ENCODE measurements at regions of chr6 and their contacts with region 1.

Region 1: DNA sequence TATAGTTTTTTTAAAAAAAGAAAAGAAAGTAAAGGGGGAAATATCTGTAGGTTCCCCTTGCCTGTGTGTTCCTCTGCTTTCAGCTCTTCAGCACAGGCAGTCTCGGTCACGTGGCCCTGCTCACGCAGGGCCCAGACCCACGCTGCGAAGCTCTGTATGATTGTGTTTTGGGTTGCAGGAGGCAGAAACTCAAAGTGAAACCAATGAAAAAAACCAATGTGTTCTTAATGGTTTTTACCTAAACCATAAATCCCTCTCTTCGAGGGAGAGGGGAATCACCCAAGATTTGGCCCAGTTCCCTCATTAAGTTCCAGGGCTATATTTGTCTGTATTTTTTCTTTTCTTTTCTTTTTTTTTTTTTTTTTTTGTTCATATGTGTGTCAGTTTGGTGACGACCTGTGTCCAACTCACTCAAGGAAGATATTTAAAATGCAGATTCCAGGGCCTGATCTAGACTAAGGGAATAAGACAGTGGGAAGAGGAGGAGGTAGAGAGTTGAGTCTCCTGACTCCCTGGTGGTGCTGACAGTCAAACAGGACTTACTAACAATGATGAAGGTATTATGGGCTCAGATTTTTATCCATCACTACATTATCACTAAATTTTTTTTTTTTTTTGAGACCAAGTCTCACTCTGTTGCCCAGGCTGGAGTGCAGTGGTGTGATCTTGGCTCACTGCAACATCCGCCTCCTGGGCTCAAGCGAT is 33.8 kb upstream of the RREB1 start:
- DNase-seq: peak; percentile 36 to 83 (median 48)
- ATAC-seq: peak; percentile 99
- H3K4me3 ChIP-seq: peak overlapping the region; percentile 27
- H3K4me3 Mint-ChIP-seq: peak overlapping the region; percentile 25
- H3K27ac ChIP-seq: no peak overlapping the region
- H3K27ac Mint-ChIP-seq: peak overlapping the region; percentile 58
- H3K4me1 ChIP-seq: peaks cover 11% of the 10 kb centered on the region
- H3K4me1 Mint-ChIP-seq: peaks cover 12% of the 10 kb centered on the region
- H3K27me3 ChIP-seq: no peaks in the 10 kb centered on the region
- H3K27me3 Mint-ChIP-seq: no peaks in the 10 kb centered on the region
- CTCF ChIP-seq: no peak

Region 2: DNA sequence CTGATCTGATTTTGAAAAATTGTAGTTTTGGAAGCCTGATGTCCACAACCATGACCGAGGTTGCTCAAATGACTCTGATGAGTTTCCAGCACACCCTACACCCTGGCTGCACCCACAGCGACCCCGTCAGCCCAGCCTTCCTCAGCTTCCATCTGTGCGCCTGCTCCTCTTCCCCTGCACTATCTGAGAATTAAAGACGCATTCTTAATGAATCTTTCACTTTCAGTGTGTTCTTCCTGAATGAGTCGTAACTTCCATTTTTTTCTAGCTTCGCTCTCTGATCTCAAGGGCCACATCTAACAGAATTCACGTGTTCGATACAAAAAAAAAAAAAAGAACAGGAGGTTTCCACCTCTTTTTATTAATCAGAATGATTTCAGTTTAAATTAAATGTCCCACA is 12.5 kb after region 1 on chr6:
- CTCF ChIA-PET with region 1: interaction called, 4 read pairs
- POLR2A ChIA-PET with region 1: interaction called, 21 read pairs
- intact Hi-C with region 1: no loop called
- DNase-seq: peak in 9 of 14 experiments; percentile 10 to 76 (median 43)
- ATAC-seq: peak; percentile 66
- H3K4me3 ChIP-seq: peak overlapping the region; percentile 52
- H3K4me3 Mint-ChIP-seq: peak overlapping the region; percentile 78
- H3K27ac ChIP-seq: peak overlapping the region; percentile 9 to 26
- H3K27ac Mint-ChIP-seq: peak overlapping the region; percentile 70
- H3K4me1 ChIP-seq: peaks cover 20% of the 10 kb centered on the region
- H3K4me1 Mint-ChIP-seq: peaks cover 36% of the 10 kb centered on the region
- H3K27me3 ChIP-seq: no peaks in the 10 kb centered on the region
- H3K27me3 Mint-ChIP-seq: no peaks in the 10 kb centered on the region
- CTCF ChIP-seq: no peak

Region 3: GRCh38 chr6:7332090-7332745 is 258.2 kb after region 1 on chr6:
- CTCF ChIA-PET with region 1: no interaction called
- POLR2A ChIA-PET with region 1: no interaction called
- intact Hi-C with region 1: no loop called
- DNase-seq: peak in 2 of 14 experiments; percentile 11 to 22
- ATAC-seq: no peak
- H3K4me3 ChIP-seq: no peak overlapping the region
- H3K4me3 Mint-ChIP-seq: no peak overlapping the region
- H3K27ac ChIP-seq: no peak overlapping the region
- H3K27ac Mint-ChIP-seq: no peak overlapping the region
- H3K4me1 ChIP-seq: no peaks in the 10 kb centered on the region
- H3K4me1 Mint-ChIP-seq: no peaks in the 10 kb centered on the region
- H3K27me3 ChIP-seq: no peaks in the 10 kb centered on the region
- H3K27me3 Mint-ChIP-seq: peaks cover 14% of the 10 kb centered on the region
- CTCF ChIP-seq: no peak

Measured in CD4-positive, alpha-beta T cell (primary cell).